CD4-positive, alpha-beta T cell (primary cell): ENCODE measurements at regions of chr4 and their contacts with region 1.

Region 1: DNA sequence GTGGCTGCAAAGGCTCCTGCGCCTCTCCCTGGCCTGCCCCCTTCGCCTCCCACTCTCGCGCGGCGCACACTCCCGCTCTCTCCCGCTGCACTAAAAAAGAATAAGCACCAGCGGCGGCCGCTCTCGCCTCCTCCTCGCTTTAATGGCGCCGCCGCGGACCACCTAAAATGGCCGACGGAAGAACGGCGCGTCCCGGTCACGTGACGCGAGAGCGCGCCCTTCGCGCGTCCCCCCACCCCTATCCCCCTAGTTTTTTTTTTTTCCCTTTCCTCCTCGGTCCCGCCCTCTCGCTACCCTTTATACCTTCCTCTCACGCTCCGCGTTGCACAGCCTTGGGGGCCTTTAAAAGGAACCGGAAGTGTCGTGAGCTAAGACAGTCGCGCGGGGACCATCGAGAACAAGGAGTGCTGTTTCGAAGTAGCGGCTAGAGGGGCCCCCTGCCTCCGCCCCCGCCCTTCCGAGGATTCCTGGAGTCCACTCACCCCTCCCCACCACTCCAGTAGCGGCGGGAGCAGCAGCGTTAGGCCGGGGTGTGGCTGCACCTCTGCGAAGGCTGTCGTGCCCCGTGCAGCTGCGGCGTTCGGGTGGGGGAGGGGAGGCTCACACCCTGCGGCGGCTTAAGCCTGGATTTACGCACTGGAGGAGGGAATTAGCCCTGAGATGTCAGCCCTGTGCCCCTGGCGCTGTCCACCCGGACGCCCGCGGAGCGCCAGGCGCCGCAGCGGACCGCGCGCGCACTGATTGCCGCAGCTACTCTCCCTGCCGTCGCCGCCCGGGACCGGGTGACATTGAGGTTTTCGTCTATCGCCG is at the start of gene HNRNPD:
- DNase-seq: peak; percentile 77 to 99 (median 88)
- ATAC-seq: peak; percentile 83
- H3K4me3 ChIP-seq: peak within 1 kb of the TSS; percentile 97
- H3K4me3 Mint-ChIP-seq: peak within 1 kb of the TSS; percentile 99
- H3K27ac ChIP-seq: peak within 1 kb of the TSS; percentile 99
- H3K27ac Mint-ChIP-seq: peak within 1 kb of the TSS; percentile 98
- H3K4me1 ChIP-seq: peaks cover 24% of the 10 kb centered on the region
- H3K4me1 Mint-ChIP-seq: peaks cover 71% of the 10 kb centered on the region
- H3K27me3 ChIP-seq: no peaks in the 10 kb centered on the region
- H3K27me3 Mint-ChIP-seq: no peaks in the 10 kb centered on the region
- CTCF ChIP-seq: peak; percentile 11
- total RNA-seq, gene HNRNPD: 235 to 244 TPM

Region 2: GRCh38 chr4:82284858-82285805 is 88.9 kb before region 1 on chr4:
- CTCF ChIA-PET with region 1: interaction called, 5 read pairs
- POLR2A ChIA-PET with region 1: interaction called, 9 read pairs
- intact Hi-C with region 1: loop called (anchors 5 kb)
- DNase-seq: peak; percentile 98 to 100 (median 99)
- ATAC-seq: peak; percentile 88
- H3K4me3 ChIP-seq: peak overlapping the region; percentile 57
- H3K4me3 Mint-ChIP-seq: peak overlapping the region; percentile 85
- H3K27ac ChIP-seq: peak overlapping the region in 1 of 2 donors; percentile 69
- H3K27ac Mint-ChIP-seq: peak overlapping the region; percentile 80
- H3K4me1 ChIP-seq: peaks cover 12% of the 10 kb centered on the region
- H3K4me1 Mint-ChIP-seq: peaks cover 19% of the 10 kb centered on the region
- H3K27me3 ChIP-seq: no peaks in the 10 kb centered on the region
- H3K27me3 Mint-ChIP-seq: no peaks in the 10 kb centered on the region
- CTCF ChIP-seq: peak; percentile 96

Region 3: DNA sequence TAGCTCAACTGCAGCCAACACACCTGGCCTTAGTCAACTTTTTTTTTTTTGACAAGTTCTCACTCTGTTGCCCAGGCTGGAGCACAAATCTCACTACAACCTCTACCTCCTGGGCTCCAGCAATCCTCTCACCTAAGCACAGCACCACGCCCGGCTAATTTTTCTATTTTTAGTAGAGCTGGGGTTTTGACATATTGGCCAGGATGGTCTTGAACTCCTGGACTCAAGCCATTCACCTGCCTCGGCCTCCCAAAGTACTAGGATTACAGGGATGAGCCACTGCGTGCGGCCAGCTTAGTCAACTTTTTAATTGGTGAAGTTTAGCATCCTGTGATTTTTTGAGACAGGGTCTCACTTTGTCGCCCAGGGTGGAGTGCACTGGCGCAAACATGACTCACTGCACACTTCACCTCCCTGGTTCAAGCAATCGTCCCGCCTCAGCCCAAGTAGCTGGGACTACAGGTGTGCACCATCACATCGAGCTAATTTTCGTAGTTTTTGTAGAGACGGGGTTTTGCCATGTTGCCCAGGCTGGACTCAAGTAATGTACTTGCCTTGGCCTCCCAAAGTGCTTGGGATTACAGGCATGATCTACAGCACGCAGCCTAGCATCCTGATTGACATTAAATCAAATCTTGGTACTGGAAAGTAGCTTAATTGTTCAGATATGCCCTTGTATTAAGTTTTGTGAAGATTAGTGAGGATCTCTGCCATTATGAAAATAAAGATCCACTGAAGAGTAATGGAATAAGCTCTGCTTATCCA is 48.0 kb after region 1 on chr4:
- CTCF ChIA-PET with region 1: no interaction called
- POLR2A ChIA-PET with region 1: interaction called, 277 read pairs
- intact Hi-C with region 1: no loop called
- DNase-seq: no peak
- ATAC-seq: no peak
- H3K4me3 ChIP-seq: no peak overlapping the region
- H3K4me3 Mint-ChIP-seq: no peak overlapping the region
- H3K27ac ChIP-seq: no peak overlapping the region
- H3K27ac Mint-ChIP-seq: peak overlapping the region; percentile 24
- H3K4me1 ChIP-seq: peaks cover 5% of the 10 kb centered on the region
- H3K4me1 Mint-ChIP-seq: peaks cover 44% of the 10 kb centered on the region
- H3K27me3 ChIP-seq: peaks cover 0 to 3% of the 10 kb centered on the region in 2 experiments
- H3K27me3 Mint-ChIP-seq: peaks cover 7% of the 10 kb centered on the region
- CTCF ChIP-seq: no peak

Region 4: GRCh38 chr4:83012687-83013419 is 638.8 kb after region 1 on chr4:
- CTCF ChIA-PET with region 1: no interaction called
- POLR2A ChIA-PET with region 1: interaction called, 3 read pairs
- intact Hi-C with region 1: loop called (anchors 5 to 10 kb)
- DNase-seq: peak; percentile 94 to 99 (median 96)
- ATAC-seq: peak; percentile 85
- H3K4me3 ChIP-seq: peak overlapping the region; percentile 71
- H3K4me3 Mint-ChIP-seq: peak overlapping the region; percentile 97
- H3K27ac ChIP-seq: peak overlapping the region; percentile 33 to 49
- H3K27ac Mint-ChIP-seq: peak overlapping the region; percentile 91
- H3K4me1 ChIP-seq: peaks cover 26% of the 10 kb centered on the region
- H3K4me1 Mint-ChIP-seq: peaks cover 58% of the 10 kb centered on the region
- H3K27me3 ChIP-seq: no peaks in the 10 kb centered on the region
- H3K27me3 Mint-ChIP-seq: no peaks in the 10 kb centered on the region
- CTCF ChIP-seq: peak; percentile 56

Region 5: GRCh38 chr4:83025563-83025962 is 651.5 kb after region 1 on chr4:
- CTCF ChIA-PET with region 1: no interaction called
- POLR2A ChIA-PET with region 1: no interaction called
- intact Hi-C with region 1: no loop called
- DNase-seq: no peak
- ATAC-seq: no peak
- H3K4me3 ChIP-seq: no peak overlapping the region
- H3K4me3 Mint-ChIP-seq: no peak overlapping the region
- H3K27ac ChIP-seq: no peak overlapping the region
- H3K27ac Mint-ChIP-seq: no peak overlapping the region
- H3K4me1 ChIP-seq: no peaks in the 10 kb centered on the region
- H3K4me1 Mint-ChIP-seq: no peaks in the 10 kb centered on the region
- H3K27me3 ChIP-seq: no peaks in the 10 kb centered on the region
- H3K27me3 Mint-ChIP-seq: peaks cover 11% of the 10 kb centered on the region
- CTCF ChIP-seq: no peak

Region 6: GRCh38 chr4:83484500-83485461 is 1110.8 kb after region 1 on chr4 and contains the start of gene ABRAXAS1:
- CTCF ChIA-PET with region 1: no interaction called
- POLR2A ChIA-PET with region 1: no interaction called
- intact Hi-C with region 1: loop called (anchors 10 kb)
- DNase-seq: peak; percentile 87 to 99 (median 94)
- ATAC-seq: peak; percentile 91
- H3K4me3 ChIP-seq: peak within 1 kb of the TSS; percentile 71
- H3K4me3 Mint-ChIP-seq: peak within 1 kb of the TSS; percentile 94
- H3K27ac ChIP-seq: peak within 1 kb of the TSS; percentile 47 to 71
- H3K27ac Mint-ChIP-seq: peak within 1 kb of the TSS; percentile 92
- H3K4me1 ChIP-seq: peaks cover 17% of the 10 kb centered on the region
- H3K4me1 Mint-ChIP-seq: peaks cover 32% of the 10 kb centered on the region
- H3K27me3 ChIP-seq: no peaks in the 10 kb centered on the region
- H3K27me3 Mint-ChIP-seq: no peaks in the 10 kb centered on the region
- CTCF ChIP-seq: no peak
- total RNA-seq, gene ABRAXAS1: 19.3 to 19.5 TPM